Dorsolateral prefrontal cortex (tissue), 120 donors: ENCODE measurements at regions of chr17 and their contacts with region 1.

Region 1: GRCh38 chr17:74493381-74493833 is 27.0 kb downstream of the CD300A start:
- DNase-seq: peak; percentile 57 to 85 (median 72)
- H3K4me3 ChIP-seq: no peak overlapping the region
- H3K27ac ChIP-seq: no peak overlapping the region
- H3K27me3 ChIP-seq: no peaks in the 10 kb centered on the region
- CTCF ChIP-seq: peak; percentile 68 to 95 (median 88)

Region 2: DNA sequence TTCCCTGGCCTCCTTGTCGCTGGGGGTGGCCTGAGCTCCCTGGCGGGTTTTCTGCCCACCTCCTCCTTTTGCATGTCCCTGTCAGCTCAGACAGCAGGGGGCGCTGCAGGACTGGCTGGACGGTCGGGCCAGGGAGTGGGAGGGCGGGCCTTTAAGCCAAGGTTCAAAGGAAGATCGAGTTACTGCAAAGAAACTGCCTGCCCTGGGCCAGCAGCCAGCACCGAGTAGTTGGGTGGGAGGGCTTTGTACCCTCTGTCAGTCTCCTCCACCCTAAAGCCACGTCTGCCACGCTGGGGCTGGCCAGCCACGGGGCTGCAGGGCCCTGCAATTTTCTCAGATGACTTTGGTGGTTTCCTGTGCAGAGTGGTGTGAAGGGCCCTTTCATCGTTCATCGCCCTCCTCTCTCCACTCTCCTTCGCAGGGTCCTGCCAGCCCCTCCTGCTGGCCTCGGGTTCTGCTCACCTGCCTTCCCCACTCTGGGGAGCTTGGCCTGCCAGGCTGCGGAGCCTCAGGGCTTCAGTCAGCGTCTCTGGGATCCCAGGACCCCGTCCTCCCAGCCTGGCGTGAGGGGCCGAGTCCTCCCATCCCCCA is 113.8 kb before region 1 on chr17:
- intact Hi-C with region 1: loop called in 1 of 2 experiments (anchors 10 kb)
- DNase-seq: peak; percentile 86 to 96 (median 90)
- H3K4me3 ChIP-seq: peak overlapping the region in 3 of 59 donors; percentile 23 to 24 (median 23)
- H3K27ac ChIP-seq: peak overlapping the region in 15 of 59 donors; percentile 0 to 77 (median 25)
- H3K27me3 ChIP-seq: no peaks in the 10 kb centered on the region
- CTCF ChIP-seq: peak; percentile 77 to 99 (median 96)

Region 3: DNA sequence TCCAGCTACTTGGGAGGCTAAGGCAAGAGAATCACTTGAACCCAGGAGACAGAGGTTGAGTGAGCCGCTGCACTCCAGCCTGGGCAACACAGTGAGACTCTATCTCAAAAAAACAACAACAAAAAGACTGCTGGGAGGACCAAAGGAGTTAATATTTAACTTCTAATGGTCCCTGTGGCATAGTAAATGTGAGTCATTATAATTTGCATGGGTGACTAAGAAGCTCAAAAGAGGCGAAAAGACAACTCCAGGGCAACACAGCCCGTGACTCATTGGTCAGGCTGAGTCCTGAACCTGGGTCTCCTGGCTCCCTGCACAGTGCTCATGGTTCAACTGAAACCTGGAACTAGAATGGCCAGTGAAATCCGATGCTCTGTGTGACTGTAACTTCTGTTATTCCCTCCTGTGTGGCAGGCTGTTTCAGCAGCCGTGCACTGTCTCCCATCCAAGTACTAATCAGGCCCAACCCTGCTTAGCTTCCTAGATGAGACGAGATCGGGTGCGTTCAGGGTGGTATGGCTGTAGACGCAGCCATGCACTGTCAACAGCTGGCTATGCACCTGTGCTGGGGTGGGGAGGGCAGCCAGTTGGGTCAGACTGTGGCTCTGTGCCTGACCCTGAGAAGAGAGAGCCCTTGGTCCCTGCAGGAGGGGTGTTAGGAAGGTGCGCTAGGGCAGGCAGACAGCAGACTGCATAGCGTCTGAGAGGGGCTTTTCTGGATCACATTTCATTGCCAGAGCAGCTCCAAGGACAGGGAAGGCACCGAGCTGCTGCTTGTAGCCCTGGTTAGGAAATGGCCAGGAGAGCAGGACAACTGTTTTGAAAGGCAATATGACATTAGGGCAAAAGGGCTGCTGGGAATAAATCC is 76.0 kb before region 1 on chr17:
- intact Hi-C with region 1: no loop called
- DNase-seq: no peak
- H3K4me3 ChIP-seq: no peak overlapping the region
- H3K27ac ChIP-seq: peak overlapping the region in 1 of 59 donors; percentile 29
- H3K27me3 ChIP-seq: peaks cover 0 to 5% (median 0%) of the 10 kb centered on the region in 45 donors
- CTCF ChIP-seq: no peak

Region 4: DNA sequence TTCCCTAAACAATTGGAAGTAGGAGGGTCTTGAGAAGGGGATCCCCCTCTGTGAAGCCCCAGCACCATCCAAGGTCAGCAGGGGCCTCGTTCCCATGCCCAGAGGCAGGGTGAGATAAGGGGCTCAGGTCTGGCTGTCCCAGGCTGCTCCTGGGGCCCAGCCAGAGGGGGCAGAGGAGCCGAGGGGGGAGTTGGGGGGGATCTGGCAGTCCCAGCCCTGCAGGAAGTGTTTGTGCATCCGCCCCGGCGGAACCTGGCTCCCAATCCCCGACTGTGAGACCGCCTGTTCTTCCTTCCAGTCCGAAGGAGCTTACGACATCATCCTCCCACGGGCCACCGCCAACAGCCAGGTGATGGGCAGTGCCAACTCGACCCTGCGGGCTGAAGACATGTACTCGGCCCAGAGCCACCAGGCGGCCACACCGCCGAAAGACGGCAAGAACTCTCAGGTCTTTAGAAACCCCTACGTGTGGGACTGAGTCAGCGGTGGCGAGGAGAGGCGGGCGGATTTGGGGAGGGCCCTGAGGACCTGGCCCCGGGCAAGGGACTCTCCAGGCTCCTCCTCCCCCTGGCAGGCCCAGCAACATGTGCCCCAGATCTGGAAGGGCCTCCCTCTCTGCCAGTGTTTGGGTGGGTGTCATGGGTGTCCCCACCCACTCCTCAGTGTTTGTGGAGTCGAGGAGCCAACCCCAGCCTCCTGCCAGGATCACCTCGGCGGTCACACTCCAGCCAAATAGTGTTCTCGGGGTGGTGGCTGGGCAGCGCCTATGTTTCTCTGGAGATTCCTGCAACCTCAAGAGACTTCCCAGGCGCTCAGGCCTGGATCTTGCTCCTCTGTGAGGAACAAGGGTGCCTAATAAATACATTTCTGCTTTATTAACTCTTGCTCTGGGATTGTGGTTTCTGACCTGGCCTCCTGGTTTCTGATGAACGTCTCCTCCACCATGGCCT is 46.6 kb before region 1 on chr17:
- intact Hi-C with region 1: no loop called
- DNase-seq: peak in 2 of 10 donors; percentile 63 to 97
- H3K4me3 ChIP-seq: no peak overlapping the region
- H3K27ac ChIP-seq: peak overlapping the region in 35 of 59 donors; percentile 2 to 97 (median 53)
- H3K27me3 ChIP-seq: no peaks in the 10 kb centered on the region
- CTCF ChIP-seq: no peak